Panc1 (cell line): ENCODE measurements at regions of chr6 and their contacts with region 1.

Region 1: DNA sequence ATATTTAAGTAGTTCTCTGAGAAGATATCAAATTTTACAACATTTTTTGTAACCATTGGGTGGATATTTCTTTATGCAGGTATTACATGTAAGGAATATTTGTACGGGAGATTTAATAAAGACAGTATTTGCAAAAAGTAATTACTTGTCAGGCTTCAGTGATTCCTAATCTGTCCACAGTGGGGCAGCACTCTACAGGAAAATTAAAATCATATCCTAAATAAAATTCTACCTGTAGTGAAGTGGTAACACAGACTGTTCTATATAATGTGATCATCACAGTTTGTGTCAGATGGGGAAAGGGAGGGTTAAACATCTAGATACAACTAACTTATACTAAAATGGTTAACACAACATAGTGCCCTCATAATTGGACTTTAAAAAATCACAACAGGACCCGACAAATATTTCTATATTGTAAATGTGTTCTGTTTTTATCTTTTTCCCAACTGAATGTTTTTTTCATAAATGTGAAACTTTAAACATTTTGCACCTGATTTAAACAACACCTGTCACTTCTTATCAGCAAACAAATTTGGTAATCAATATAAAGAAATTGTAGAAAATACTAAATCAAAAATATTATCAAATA is 145.6 kb upstream of the MANEA start:
- DNase-seq: peak; percentile 27
- ATAC-seq: no peak; the same call in 1 of the 2 replicates
- H3K4me3 ChIP-seq: no peak overlapping the region
- H3K27ac ChIP-seq: no peak overlapping the region
- H3K4me1 ChIP-seq: no peaks in the 10 kb centered on the region
- H3K27me3 ChIP-seq: no peaks in the 10 kb centered on the region
- CTCF ChIP-seq: peak; percentile 73; the same call in 1 of the 2 replicates

Region 2: GRCh38 chr6:95091823-95092436 is 339.8 kb before region 1 on chr6:
- CTCF ChIA-PET with region 1: no interaction called
- POLR2A ChIA-PET with region 1: no interaction called
- in situ Hi-C with region 1: no loop called
- intact Hi-C with region 1: no loop called
- DNase-seq: no peak
- ATAC-seq: peak; percentile 84
- H3K4me3 ChIP-seq: no peak overlapping the region
- H3K27ac ChIP-seq: no peak overlapping the region
- H3K4me1 ChIP-seq: peaks cover 16% of the 10 kb centered on the region
- H3K27me3 ChIP-seq: no peaks in the 10 kb centered on the region
- CTCF ChIP-seq: peak; percentile 60; the same call in 1 of the 2 replicates

Region 3: DNA sequence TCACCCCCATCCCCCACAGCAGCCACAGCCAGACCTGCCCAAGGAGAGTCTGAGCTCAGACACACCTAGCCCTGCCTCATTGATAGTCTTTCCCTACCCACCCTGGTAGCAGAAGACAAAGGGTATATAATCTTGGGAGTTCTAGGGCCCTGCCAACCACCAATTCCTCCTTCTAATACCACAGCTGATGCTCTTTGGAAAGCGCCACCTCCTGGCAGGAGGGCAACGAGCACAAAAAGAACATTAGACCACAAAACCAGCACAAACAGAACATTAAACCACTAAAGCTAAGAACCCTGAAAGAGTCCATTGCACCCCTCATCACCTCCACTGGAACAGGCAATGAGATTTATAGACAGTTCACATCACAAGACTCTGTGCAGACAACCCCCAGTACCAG is 388.2 kb after region 1 on chr6:
- CTCF ChIA-PET with region 1: no interaction called
- POLR2A ChIA-PET with region 1: no interaction called
- in situ Hi-C with region 1: no loop called
- intact Hi-C with region 1: no loop called
- DNase-seq: no peak
- ATAC-seq: no peak
- H3K4me3 ChIP-seq: no peak overlapping the region
- H3K27ac ChIP-seq: no peak overlapping the region
- H3K4me1 ChIP-seq: no peaks in the 10 kb centered on the region
- H3K27me3 ChIP-seq: no peaks in the 10 kb centered on the region
- CTCF ChIP-seq: peak; percentile 18; the same call in 1 of the 2 replicates

Region 4: DNA sequence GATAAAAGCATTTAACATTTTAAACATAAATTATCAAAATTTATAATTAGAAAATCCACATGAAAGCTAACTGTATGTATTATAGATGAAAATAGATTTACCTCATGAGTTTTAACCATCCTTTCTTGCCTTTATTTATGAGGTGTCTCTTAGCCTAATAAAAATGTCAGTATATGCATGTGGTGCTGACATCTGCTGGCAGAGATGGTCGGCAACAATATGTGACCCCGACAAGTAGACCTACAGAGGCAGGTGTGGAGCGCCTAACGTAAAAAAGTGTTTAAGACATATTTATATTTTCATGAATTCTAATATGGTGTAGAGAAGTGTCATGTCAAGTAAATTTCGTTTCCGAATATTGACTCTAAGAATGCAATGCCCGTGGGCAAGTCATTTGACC is 435.0 kb after region 1 on chr6:
- CTCF ChIA-PET with region 1: no interaction called
- POLR2A ChIA-PET with region 1: no interaction called
- in situ Hi-C with region 1: no loop called
- intact Hi-C with region 1: loop called (anchors 5 kb)
- DNase-seq: no peak
- ATAC-seq: no peak
- H3K4me3 ChIP-seq: no peak overlapping the region
- H3K27ac ChIP-seq: no peak overlapping the region
- H3K4me1 ChIP-seq: no peaks in the 10 kb centered on the region
- H3K27me3 ChIP-seq: no peaks in the 10 kb centered on the region
- CTCF ChIP-seq: peak; percentile 66

Region 5: DNA sequence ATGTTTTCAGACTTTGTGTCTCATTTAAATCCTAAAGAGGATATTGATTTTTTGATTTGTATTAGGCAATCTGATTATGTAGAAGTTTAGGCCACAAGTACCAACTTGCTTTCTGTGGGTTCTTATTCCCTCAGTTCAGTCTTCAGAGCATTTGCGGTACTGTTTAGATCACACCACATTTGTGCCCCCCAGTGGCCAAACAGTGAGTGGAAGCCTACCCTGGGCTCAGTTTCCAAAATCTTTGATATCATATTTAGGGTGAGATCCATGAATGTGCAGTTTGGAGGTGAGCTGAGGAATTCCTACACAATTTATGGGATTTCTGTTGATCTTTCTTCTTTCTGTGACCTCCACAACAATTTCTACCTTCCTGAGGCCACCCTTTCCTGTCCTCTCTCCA is 491.8 kb after region 1 on chr6:
- CTCF ChIA-PET with region 1: no interaction called
- POLR2A ChIA-PET with region 1: no interaction called
- in situ Hi-C with region 1: no loop called
- intact Hi-C with region 1: loop called (anchors 5 kb)
- DNase-seq: no peak
- ATAC-seq: no peak
- H3K4me3 ChIP-seq: no peak overlapping the region
- H3K27ac ChIP-seq: no peak overlapping the region
- H3K4me1 ChIP-seq: no peaks in the 10 kb centered on the region
- H3K27me3 ChIP-seq: no peaks in the 10 kb centered on the region
- CTCF ChIP-seq: peak; percentile 40